HepG2 (cell line): ENCODE measurements at regions of chr7 and their contacts with region 1.

Region 1: DNA sequence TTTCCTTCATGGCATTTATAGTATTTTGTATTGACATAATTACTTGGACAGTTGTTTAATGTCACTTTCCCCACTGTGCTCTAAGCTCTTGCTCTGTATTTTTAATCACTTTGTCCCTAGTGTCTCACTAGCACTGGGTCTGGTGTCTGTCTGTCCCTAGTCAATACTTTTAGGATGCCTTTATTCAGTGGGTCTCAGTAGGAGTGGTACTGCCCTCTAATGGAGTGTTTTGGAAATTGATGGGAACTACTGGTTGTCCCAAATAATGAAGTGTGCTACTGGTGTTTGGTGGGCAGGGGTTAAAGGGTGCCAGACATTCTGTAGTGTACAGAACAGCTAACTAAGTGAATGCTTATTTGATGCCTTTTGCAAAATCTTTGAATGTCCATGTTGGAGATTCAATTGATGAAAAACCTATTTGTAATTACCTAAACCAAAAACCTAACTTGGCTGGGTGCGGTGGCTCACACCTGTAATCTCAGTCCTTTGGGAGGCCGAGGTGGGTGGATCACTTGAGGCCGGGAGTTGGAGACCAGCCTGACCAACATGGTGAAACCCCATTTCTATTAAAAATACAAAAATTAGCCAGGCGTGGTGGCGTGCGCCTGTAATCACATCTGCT is 33.3 kb downstream of the CDK14 start:
- DNase-seq: peak; percentile 46
- ATAC-seq: peak; percentile 89
- H3K4me3 ChIP-seq: no peak overlapping the region
- H3K27ac ChIP-seq: no peak overlapping the region
- H3K4me1 ChIP-seq: no peaks in the 10 kb centered on the region
- H3K27me3 ChIP-seq: no peaks in the 10 kb centered on the region
- CTCF ChIP-seq: peak; percentile 67
- EP300 ChIP-seq: no peak
- POLR2A ChIP-seq: no peak
- RAD21 ChIP-seq: no peak

Region 2: GRCh38 chr7:90455163-90456030 is 174.0 kb before region 1 on chr7:
- CTCF ChIA-PET with region 1: interaction called, 15 read pairs
- POLR2A ChIA-PET with region 1: no interaction called
- in situ Hi-C with region 1: no loop called
- intact Hi-C with region 1: loop called (anchors 1 kb)
- DNase-seq: peak; percentile 10
- ATAC-seq: peak; percentile 90
- H3K4me3 ChIP-seq: peak overlapping the region in 2 of 3 experiments; percentile 22 to 41; a peak in 1 of 6 replicates
- H3K27ac ChIP-seq: no peak overlapping the region
- H3K4me1 ChIP-seq: peaks cover 16% of the 10 kb centered on the region
- H3K27me3 ChIP-seq: no peaks in the 10 kb centered on the region
- CTCF ChIP-seq: peak; percentile 68
- EP300 ChIP-seq: no peak
- POLR2A ChIP-seq: no peak
- RAD21 ChIP-seq: no peak

Region 3: DNA sequence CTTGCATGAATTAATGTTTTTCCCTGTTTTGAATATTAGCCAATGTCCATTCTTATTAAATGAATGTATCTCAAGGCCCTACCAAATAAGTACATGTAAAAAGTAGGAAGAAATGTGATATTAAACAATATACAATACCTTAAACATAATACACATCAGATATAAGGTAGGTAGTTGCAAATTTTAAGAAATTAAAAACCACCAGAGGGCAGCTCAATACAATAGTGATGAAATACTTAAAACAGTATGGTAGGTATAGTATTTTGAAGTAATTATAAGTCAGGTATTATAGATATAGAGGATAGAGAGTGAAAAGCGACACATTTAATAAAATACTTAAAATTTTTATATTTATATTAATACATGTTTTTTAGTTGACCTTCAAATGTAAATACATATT is 76.9 kb before region 1 on chr7:
- CTCF ChIA-PET with region 1: no interaction called
- POLR2A ChIA-PET with region 1: no interaction called
- in situ Hi-C with region 1: no loop called
- intact Hi-C with region 1: loop called (anchors 1 kb)
- DNase-seq: no peak
- ATAC-seq: no peak
- H3K4me3 ChIP-seq: no peak overlapping the region
- H3K27ac ChIP-seq: no peak overlapping the region
- H3K4me1 ChIP-seq: peaks cover 6% of the 10 kb centered on the region; the same call in 1 of the 2 replicates
- H3K27me3 ChIP-seq: no peaks in the 10 kb centered on the region
- CTCF ChIP-seq: no peak
- EP300 ChIP-seq: no peak
- POLR2A ChIP-seq: no peak
- RAD21 ChIP-seq: no peak

Region 4: GRCh38 chr7:90655566-90655965 is 26.2 kb after region 1 on chr7:
- CTCF ChIA-PET with region 1: no interaction called
- POLR2A ChIA-PET with region 1: no interaction called
- in situ Hi-C with region 1: no loop called
- intact Hi-C with region 1: no loop called
- DNase-seq: no peak
- ATAC-seq: no peak
- H3K4me3 ChIP-seq: no peak overlapping the region
- H3K27ac ChIP-seq: no peak overlapping the region
- H3K4me1 ChIP-seq: no peaks in the 10 kb centered on the region
- H3K27me3 ChIP-seq: no peaks in the 10 kb centered on the region
- CTCF ChIP-seq: no peak
- EP300 ChIP-seq: no peak
- POLR2A ChIP-seq: no peak
- RAD21 ChIP-seq: no peak

Region 5: GRCh38 chr7:91034459-91035368 is 405.3 kb after region 1 on chr7:
- CTCF ChIA-PET with region 1: no interaction called
- POLR2A ChIA-PET with region 1: no interaction called
- in situ Hi-C with region 1: no loop called
- intact Hi-C with region 1: loop called (anchors 1 kb)
- DNase-seq: peak; percentile 8
- ATAC-seq: peak; percentile 51; the same call in 2 of the 3 replicates
- H3K4me3 ChIP-seq: no peak overlapping the region
- H3K27ac ChIP-seq: no peak overlapping the region
- H3K4me1 ChIP-seq: no peaks in the 10 kb centered on the region
- H3K27me3 ChIP-seq: no peaks in the 10 kb centered on the region
- CTCF ChIP-seq: peak; percentile 63
- EP300 ChIP-seq: no peak
- POLR2A ChIP-seq: no peak
- RAD21 ChIP-seq: no peak